Activated T-helper 1 cell treated with anti-CD3 and anti-CD28 coated beads, Interleukin-12 subunit alpha, Interleukin-12 subunit beta, Interleukin-2, Interleukin-4 antibody, amounts not matched to agents 30 ng/mL and 10 ng/mL and 1 ng/mL, durations not matched to agents 14 hours and 24 hours and 36 hours (primary cell): ENCODE measurements at regions of chr3 and their contacts with region 1.

Region 1: DNA sequence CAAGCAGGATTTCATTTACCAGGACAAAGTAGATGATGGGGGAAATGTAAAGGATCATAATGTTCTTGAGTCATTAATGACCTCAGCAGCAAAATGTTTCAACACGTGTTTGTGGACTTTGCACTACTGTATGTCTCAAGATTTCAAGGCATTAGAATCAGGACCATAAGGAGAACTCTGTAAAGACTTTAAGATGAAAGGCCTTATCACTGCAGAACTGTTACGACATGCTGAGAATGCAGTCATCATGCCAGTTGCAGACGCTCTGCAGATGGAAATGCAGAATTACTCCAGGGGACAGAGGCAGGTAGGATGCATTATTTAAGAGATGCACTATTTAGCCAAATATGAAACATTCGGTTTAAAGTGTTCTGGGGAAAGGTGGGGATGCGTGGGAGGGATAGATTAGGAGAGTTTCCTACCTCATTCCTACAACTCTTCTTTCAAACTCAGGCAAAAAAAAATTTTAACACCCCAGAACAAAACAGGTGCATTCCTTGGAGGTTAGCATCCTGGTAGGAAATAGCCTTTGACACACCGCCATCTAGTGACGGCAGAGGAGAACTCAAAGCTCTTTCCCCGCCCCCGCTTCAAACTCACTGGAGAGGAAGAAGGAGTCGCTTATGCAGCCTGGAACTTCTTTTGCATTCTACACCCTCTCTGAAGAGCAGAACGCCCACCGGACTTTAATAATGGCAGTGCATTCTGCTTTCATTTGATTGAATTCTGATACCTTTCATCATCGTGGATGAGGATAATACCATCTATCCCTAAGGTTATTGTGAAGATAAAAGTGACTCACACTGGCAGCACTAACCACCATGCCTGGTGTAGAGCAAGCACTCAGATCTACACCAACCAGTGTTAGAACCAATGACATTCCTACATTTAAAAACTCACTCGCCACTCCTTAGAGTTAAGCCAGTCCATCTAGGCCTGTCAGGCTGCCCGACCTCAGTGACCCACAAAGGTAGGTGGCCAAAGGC is 43.1 kb upstream of the TOPAZ1 start:
- DNase-seq: peak; percentile 49
- H3K4me3 Mint-ChIP-seq: no peak overlapping the region
- H3K27ac Mint-ChIP-seq: no peak overlapping the region
- H3K4me1 Mint-ChIP-seq: no peaks in the 10 kb centered on the region
- H3K27me3 Mint-ChIP-seq: peaks cover 7% of the 10 kb centered on the region

Region 2: DNA sequence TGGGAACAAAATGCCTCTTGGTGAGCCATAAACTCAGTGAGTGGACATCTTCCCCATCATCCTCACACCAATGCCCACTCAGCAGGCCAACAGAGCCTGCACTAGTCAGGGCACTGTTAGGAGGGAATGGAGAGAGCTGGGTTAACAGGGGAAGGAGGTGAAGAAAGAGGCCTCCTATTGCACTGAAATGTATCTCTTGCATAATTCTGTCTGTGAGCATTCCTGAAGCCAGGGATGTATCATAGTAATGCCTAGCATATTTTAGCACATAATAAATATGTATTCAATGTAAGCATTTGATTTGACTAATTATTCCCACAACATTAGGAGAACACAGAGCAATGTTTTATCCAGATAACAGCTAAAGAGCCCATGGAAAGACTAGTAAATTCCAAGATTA is 658.0 kb before region 1 on chr3:
- intact Hi-C with region 1: loop called (anchors 1 kb)
- DNase-seq: no peak
- H3K4me3 Mint-ChIP-seq: no peak overlapping the region
- H3K27ac Mint-ChIP-seq: no peak overlapping the region
- H3K4me1 Mint-ChIP-seq: no peaks in the 10 kb centered on the region
- H3K27me3 Mint-ChIP-seq: peaks cover 2% of the 10 kb centered on the region

Region 3: DNA sequence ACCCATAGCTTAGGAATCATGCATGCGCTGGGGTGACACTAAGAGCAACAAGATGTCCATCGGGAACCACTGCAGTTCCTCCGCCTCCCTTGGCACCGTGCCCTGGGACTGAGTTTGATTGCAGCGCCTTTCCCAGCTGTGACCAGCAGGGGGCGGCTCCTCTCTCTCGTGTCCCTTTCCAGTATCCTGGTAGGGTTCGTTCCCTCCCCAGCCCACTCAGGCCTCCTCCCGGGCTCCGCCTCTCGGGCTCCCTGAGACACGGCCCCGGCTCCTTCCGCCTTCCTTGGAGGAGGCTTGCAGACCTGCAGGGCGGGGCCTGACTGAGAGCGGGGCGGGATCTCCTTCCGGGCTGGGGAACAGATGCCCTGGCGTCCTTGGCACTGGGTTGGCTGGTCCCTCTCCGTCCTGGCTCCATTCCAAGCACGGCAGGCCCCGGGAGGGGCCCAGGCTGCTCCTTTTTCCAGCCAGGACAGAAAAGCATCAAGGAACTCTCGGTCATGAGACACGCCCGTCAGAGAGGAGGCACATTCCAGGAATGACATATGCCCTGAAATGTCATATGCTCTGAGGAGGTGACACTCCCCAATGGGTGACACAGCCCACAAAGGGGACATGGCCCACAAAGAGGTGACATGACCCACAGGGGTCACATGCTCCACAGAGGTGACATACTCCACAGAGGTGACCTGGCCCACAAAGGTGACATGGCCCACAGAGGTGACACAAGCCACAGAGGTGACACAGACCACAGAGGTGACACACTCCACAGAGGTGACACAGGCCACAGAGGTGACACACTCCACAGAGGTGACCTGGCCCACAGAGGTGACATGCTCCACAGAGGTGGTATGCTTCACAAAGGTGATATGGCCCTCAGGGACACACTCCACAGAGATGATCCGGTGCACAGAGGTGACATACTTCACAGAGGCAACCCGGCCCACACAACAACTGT is 428.8 kb before region 1 on chr3:
- intact Hi-C with region 1: loop called (anchors 1 kb)
- DNase-seq: peak; percentile 40
- H3K4me3 Mint-ChIP-seq: no peak overlapping the region
- H3K27ac Mint-ChIP-seq: no peak overlapping the region
- H3K4me1 Mint-ChIP-seq: peaks cover 9% of the 10 kb centered on the region
- H3K27me3 Mint-ChIP-seq: peaks cover 19% of the 10 kb centered on the region

Region 4: GRCh38 chr3:43855674-43856299 is 342.8 kb before region 1 on chr3:
- intact Hi-C with region 1: loop called (anchors 1 kb)
- DNase-seq: peak; percentile 25
- H3K4me3 Mint-ChIP-seq: no peak overlapping the region
- H3K27ac Mint-ChIP-seq: no peak overlapping the region
- H3K4me1 Mint-ChIP-seq: no peaks in the 10 kb centered on the region
- H3K27me3 Mint-ChIP-seq: peaks cover 15% of the 10 kb centered on the region

Region 5: DNA sequence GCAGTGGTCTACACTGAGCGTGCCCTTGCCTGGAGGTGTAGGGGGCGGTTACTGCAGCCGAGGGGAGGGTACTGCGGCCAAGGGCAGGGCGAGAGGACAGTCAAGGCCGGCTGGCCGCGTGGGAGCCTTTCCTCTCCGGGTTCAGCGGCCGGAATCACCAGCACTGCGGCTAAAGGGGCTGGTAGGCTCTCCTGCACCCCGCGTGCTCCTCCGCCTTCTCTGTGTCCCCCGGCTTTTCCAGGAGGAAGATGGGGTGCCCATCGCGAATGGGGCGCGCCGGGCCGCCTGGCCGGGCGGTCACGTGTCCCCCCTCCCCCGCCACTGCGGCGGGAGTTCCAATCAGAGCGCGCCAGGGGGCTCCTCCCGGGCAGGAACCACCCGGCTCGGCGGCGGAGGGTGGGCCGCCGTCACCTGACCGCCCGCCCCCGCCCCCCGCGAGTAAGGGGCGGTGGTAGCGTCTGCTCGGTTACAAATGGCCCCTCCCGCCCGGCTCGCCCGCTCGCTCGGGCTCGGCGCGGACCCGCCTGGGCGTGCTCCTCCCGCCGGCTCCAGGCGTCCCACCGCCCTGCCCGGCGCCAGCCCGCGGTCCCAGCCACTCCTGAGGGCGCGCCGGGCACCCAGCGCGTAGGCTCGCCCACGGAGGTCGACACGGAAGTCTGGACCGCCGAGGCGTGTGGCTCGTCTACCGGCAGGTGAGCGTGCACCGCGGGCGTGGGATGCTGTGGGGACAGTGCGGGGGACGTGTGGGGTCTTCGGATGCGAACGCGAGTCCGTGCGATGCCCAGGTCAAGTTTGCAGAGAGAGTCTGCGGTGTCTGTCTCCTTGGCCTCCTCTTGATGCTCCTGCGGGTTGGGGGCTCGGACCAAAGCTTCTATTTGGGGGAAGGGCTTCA is 199.5 kb before region 1 on chr3:
- intact Hi-C with region 1: loop called (anchors 5 kb)
- DNase-seq: no peak
- H3K4me3 Mint-ChIP-seq: no peak overlapping the region
- H3K27ac Mint-ChIP-seq: no peak overlapping the region
- H3K4me1 Mint-ChIP-seq: peaks cover 35% of the 10 kb centered on the region
- H3K27me3 Mint-ChIP-seq: peaks cover 75% of the 10 kb centered on the region

Region 6: DNA sequence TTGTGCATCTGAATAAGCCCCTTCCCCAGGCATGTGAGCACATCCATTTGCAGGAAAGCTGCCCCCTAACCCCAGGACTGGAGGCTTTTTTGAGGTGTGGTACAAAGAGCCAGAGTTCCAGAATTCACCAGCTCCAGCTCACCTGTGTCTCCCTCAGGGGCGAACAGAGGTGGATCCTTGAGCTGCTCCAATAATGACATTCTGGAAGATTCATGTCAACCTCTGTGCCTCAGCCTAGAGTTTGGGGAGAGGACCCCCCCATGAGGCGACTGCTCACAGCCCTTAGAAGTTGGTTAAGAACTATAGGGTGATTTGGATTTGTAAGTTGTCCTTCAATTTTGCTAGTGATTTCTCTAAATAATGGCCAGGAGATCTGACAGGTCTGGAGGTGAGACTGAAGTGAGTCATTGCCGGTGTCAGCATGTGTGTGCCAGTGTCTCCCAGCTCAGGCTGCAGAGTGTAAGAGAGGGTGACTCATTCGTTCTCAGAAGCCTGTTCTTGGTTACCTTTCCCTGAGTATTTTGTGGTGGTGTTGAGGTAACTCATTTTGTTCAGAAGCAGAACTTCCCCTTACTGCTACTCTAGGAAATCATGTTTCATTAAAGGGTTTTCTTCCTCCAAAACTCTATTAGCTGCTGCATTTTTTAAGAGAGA is 93.8 kb before region 1 on chr3:
- intact Hi-C with region 1: loop called (anchors 1 kb)
- DNase-seq: peak; percentile 31
- H3K4me3 Mint-ChIP-seq: no peak overlapping the region
- H3K27ac Mint-ChIP-seq: no peak overlapping the region
- H3K4me1 Mint-ChIP-seq: peaks cover 20% of the 10 kb centered on the region
- H3K27me3 Mint-ChIP-seq: peaks cover 18% of the 10 kb centered on the region